Naive thymus-derived CD4-positive, alpha-beta T cell (primary cell): ENCODE measurements at regions of chr14 and their contacts with region 1.

Region 1: DNA sequence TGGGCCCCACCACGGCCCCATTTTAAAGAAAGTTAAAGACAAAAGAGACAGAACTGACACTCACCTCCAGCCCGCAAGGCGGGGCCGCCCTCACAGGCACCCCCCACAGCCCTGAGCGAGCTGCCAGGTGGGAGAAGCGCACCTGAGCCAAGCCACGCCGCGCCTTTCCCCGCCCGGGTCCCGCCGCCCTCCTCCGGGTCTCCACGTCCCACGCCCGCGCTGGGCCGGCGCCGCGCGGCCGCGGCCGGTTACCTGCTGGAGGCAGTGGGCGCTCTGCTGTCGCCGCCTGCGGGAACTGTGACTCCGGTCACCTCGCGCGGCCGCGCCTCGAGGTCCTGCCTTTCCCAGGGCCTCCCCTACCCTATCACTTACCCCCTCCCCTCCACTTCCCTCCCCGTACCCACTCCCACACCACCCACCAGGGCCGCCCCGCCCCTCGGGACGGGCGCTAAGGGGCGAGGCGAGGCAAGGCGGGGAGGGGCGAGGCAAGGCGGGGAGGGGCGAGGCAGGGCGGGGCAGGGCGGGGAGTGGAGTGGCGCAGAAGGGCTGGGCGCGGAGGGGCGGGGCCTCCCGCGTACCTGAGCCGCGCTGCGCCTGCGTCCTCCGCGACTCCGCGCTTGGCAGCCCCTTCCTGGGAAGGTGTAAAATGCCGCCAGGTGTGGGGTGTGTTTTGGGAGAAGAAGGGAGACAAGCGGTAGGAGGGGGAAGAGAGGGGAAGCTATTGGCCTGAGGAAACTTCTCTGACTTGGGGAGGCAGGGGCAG is 31.0 kb downstream of the TC2N start:
- DNase-seq: peak; percentile 71 to 92 (median 86)
- ATAC-seq: peak; percentile 94
- H3K4me3 ChIP-seq: peak overlapping the region; percentile 61
- H3K4me3 Mint-ChIP-seq: peak overlapping the region; percentile 71 to 96 (median 90)
- H3K27ac ChIP-seq: peak overlapping the region; percentile 79
- H3K27ac Mint-ChIP-seq: peak overlapping the region in 8 of 9 donors; percentile 86 to 97 (median 91)
- H3K4me1 ChIP-seq: peaks cover 36 to 41% of the 10 kb centered on the region in 2 donors
- H3K4me1 Mint-ChIP-seq: peaks cover 40 to 93% (median 87%) of the 10 kb centered on the region in 7 donors
- H3K27me3 ChIP-seq: no peaks in the 10 kb centered on the region
- H3K27me3 Mint-ChIP-seq: peaks cover 0 to 6% (median 0%) of the 10 kb centered on the region in 5 donors

Region 2: DNA sequence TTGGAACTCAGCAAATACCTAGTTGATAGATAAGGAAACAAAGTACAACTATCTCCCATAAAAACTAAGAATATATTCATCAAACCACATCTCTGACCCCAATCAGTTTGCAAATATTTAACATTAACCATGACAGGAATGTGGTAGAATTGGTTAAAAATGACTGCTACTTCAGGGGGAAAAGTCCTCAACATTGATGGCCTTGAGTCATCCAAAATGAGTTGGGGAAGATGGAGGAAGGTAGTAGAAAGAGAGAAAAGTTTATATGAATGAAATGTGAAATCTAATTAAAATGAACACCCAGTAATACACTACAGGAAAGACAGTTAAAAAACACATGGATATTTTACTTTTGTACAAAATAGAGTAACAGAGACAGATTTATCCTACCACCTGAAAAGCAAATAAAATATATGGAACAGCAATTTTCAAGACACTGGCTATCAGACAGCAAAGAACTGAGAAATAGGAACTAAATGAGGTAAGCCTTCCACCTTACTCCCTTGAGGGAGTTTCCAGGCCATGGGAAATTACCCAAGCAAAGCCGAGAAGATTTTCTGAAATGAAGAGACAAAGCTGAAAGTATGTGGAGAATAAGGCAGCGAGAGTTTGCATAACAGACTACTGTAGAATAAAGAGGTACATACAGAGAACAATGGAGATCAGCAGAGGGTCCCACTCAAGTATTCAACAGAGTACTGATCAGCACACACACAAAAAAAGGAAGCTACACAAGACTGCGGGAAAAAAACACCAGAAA is 18.6 kb before region 1 on chr14:
- CTCF ChIA-PET with region 1: no interaction called
- POLR2A ChIA-PET with region 1: interaction called, 6 read pairs
- intact Hi-C with region 1: loop called in 1 of 2 experiments (anchors 2 kb)
- DNase-seq: no peak
- ATAC-seq: peak; percentile 47
- H3K4me3 ChIP-seq: no peak overlapping the region
- H3K4me3 Mint-ChIP-seq: peak overlapping the region in 6 of 10 donors; percentile 1 to 61 (median 14)
- H3K27ac ChIP-seq: no peak overlapping the region
- H3K27ac Mint-ChIP-seq: peak overlapping the region in 6 of 9 donors; percentile 4 to 64 (median 42)
- H3K4me1 ChIP-seq: peaks cover 4 to 22% of the 10 kb centered on the region in 2 donors
- H3K4me1 Mint-ChIP-seq: peaks cover 30 to 93% (median 67%) of the 10 kb centered on the region in 7 donors
- H3K27me3 ChIP-seq: no peaks in the 10 kb centered on the region
- H3K27me3 Mint-ChIP-seq: no peaks in the 10 kb centered on the region

Region 3: GRCh38 chr14:91858215-91858905 is 22.1 kb after region 1 on chr14:
- CTCF ChIA-PET with region 1: interaction called, 6 read pairs
- POLR2A ChIA-PET with region 1: interaction called, 194 read pairs
- intact Hi-C with region 1: loop called in 1 of 2 experiments (anchors 1 kb)
- DNase-seq: no peak
- ATAC-seq: peak; percentile 63
- H3K4me3 ChIP-seq: no peak overlapping the region
- H3K4me3 Mint-ChIP-seq: peak overlapping the region; percentile 34 to 92 (median 50)
- H3K27ac ChIP-seq: peak overlapping the region; percentile 34
- H3K27ac Mint-ChIP-seq: peak overlapping the region; percentile 51 to 100 (median 88)
- H3K4me1 ChIP-seq: peaks cover 83 to 86% of the 10 kb centered on the region in 2 donors
- H3K4me1 Mint-ChIP-seq: peaks cover 74 to 99% (median 96%) of the 10 kb centered on the region in 7 donors
- H3K27me3 ChIP-seq: no peaks in the 10 kb centered on the region
- H3K27me3 Mint-ChIP-seq: no peaks in the 10 kb centered on the region

Region 4: DNA sequence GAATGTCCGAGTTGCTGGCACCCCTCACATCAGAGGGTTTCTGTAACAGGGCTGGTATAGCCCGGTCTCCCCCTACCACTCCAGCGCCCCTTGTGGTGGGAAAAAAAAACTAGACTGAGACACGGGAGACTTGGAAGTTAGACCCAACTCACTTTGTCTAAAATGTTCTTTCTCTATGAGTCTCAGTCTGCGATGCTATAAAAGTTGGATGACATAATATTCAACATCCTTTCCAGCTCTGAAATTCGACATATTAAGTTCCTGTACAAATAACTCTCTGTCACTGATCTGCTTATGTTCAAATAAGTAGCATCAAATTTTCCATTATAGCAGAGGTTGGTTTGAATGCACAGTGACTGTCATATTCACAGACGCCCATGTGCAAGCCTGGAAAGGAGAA is 56.7 kb after region 1 on chr14:
- CTCF ChIA-PET with region 1: interaction called, 5 read pairs
- POLR2A ChIA-PET with region 1: interaction called, 11 read pairs
- intact Hi-C with region 1: loop called in 1 of 2 experiments (anchors 10 kb)
- DNase-seq: peak in 3 of 9 donors; percentile 19 to 38 (median 30)
- ATAC-seq: peak; percentile 48
- H3K4me3 ChIP-seq: no peak overlapping the region
- H3K4me3 Mint-ChIP-seq: peak overlapping the region in 3 of 10 donors; percentile 31 to 55 (median 38)
- H3K27ac ChIP-seq: no peak overlapping the region
- H3K27ac Mint-ChIP-seq: peak overlapping the region; percentile 6 to 90 (median 72)
- H3K4me1 ChIP-seq: peaks cover 35 to 37% of the 10 kb centered on the region in 2 donors
- H3K4me1 Mint-ChIP-seq: peaks cover 30 to 80% (median 68%) of the 10 kb centered on the region in 7 donors
- H3K27me3 ChIP-seq: no peaks in the 10 kb centered on the region
- H3K27me3 Mint-ChIP-seq: no peaks in the 10 kb centered on the region

Region 5: DNA sequence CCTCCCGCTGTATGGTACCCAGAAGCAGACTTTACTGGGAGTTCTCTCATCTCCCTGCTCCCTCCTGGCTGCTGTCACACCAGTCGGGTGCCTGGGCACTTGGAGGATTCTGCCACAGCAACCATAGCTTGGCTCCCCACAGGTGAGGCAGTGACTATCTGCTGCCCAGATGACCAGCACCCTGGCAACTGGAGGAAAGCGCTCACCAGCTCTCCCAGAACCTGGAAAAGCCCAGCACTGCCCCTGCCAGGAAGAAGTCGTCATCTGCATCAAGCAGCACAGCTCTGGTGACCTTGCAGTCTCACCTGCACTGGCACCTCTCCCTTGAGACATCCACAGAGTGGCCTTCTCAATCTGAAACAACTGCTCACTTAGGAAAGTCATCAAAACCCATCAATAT is 62.9 kb after region 1 on chr14:
- CTCF ChIA-PET with region 1: no interaction called
- POLR2A ChIA-PET with region 1: interaction called, 11 read pairs
- intact Hi-C with region 1: loop called in 1 of 2 experiments (anchors 10 kb)
- DNase-seq: peak in 1 of 9 donors; percentile 21
- ATAC-seq: no peak
- H3K4me3 ChIP-seq: no peak overlapping the region
- H3K4me3 Mint-ChIP-seq: no peak overlapping the region
- H3K27ac ChIP-seq: no peak overlapping the region
- H3K27ac Mint-ChIP-seq: peak overlapping the region in 1 of 9 donors; percentile 77
- H3K4me1 ChIP-seq: no peaks in the 10 kb centered on the region
- H3K4me1 Mint-ChIP-seq: peaks cover 2 to 33% (median 17%) of the 10 kb centered on the region in 7 donors
- H3K27me3 ChIP-seq: no peaks in the 10 kb centered on the region
- H3K27me3 Mint-ChIP-seq: no peaks in the 10 kb centered on the region

Region 6: GRCh38 chr14:91911474-91912032 is 75.3 kb after region 1 on chr14:
- CTCF ChIA-PET with region 1: interaction called, 5 read pairs
- POLR2A ChIA-PET with region 1: interaction called, 8 read pairs
- intact Hi-C with region 1: loop called in 1 of 2 experiments (anchors 2 kb)
- DNase-seq: peak in 7 of 9 donors; percentile 39 to 76 (median 64)
- ATAC-seq: peak; percentile 95
- H3K4me3 ChIP-seq: no peak overlapping the region
- H3K4me3 Mint-ChIP-seq: peak overlapping the region in 8 of 10 donors; percentile 3 to 65 (median 32)
- H3K27ac ChIP-seq: no peak overlapping the region
- H3K27ac Mint-ChIP-seq: peak overlapping the region in 7 of 9 donors; percentile 66 to 89 (median 83)
- H3K4me1 ChIP-seq: peaks cover 0 to 9% of the 10 kb centered on the region in 2 donors
- H3K4me1 Mint-ChIP-seq: peaks cover 11 to 27% (median 23%) of the 10 kb centered on the region in 7 donors
- H3K27me3 ChIP-seq: no peaks in the 10 kb centered on the region
- H3K27me3 Mint-ChIP-seq: peaks cover 0 to 2% (median 0%) of the 10 kb centered on the region in 5 donors

Region 7: DNA sequence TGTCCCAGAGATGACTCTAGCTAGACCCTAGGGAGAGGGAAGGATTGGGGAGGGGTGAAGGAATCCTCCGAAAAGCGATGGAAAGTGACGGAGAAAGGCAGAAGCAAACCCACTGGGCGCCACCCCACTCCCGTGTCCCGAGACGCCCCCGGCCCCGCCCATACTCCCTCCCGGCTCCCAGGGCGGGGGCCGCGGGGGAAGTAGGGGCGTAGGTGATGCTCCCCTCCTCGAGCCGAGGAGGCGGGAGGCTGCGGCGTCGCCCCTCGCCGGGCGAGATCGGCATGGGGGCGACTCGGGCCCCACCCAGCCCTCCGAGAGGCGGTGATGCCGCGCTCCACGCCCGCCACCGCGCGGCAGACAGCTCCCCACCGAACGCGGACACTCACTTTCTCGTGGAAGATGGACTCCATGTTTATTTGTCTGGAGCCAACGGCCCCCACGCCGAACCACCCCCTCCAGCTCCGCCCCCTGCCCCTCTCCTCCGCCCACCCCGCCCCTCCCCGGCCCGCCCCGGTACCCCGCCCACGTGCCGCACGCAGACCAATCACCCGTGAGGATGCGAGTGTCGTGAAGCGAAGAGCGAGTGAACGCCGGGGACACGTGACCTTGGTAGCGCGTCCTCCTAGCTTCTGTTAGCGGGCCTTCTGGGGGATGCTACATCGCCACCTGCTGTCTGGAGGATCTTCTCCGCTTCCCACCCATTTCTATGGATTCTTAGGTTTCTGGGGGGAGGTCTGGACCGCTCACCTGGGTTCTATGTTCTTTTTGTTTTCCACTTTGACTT is 270.0 kb after region 1 on chr14 and contains the start of gene ATXN3:
- CTCF ChIA-PET with region 1: no interaction called
- POLR2A ChIA-PET with region 1: no interaction called
- intact Hi-C with region 1: loop called in 1 of 2 experiments (anchors 10 kb)
- DNase-seq: peak; percentile 75 to 97 (median 93)
- ATAC-seq: peak; percentile 95
- H3K4me3 ChIP-seq: peak within 1 kb of the TSS; percentile 82
- H3K4me3 Mint-ChIP-seq: peak within 1 kb of the TSS; percentile 88 to 100 (median 98)
- H3K27ac ChIP-seq: peak within 1 kb of the TSS; percentile 91
- H3K27ac Mint-ChIP-seq: peak within 1 kb of the TSS; percentile 82 to 96 (median 92)
- H3K4me1 ChIP-seq: peaks cover 5 to 17% of the 10 kb centered on the region in 2 donors
- H3K4me1 Mint-ChIP-seq: peaks cover 39 to 72% (median 61%) of the 10 kb centered on the region in 7 donors
- H3K27me3 ChIP-seq: no peaks in the 10 kb centered on the region
- H3K27me3 Mint-ChIP-seq: no peaks in the 10 kb centered on the region
- total RNA-seq, gene ATXN3: 27.8 to 54.9 (median 36.9) TPM